ENCODE measurements at regions of chr11 and their contacts with region 1.

Region 1: DNA sequence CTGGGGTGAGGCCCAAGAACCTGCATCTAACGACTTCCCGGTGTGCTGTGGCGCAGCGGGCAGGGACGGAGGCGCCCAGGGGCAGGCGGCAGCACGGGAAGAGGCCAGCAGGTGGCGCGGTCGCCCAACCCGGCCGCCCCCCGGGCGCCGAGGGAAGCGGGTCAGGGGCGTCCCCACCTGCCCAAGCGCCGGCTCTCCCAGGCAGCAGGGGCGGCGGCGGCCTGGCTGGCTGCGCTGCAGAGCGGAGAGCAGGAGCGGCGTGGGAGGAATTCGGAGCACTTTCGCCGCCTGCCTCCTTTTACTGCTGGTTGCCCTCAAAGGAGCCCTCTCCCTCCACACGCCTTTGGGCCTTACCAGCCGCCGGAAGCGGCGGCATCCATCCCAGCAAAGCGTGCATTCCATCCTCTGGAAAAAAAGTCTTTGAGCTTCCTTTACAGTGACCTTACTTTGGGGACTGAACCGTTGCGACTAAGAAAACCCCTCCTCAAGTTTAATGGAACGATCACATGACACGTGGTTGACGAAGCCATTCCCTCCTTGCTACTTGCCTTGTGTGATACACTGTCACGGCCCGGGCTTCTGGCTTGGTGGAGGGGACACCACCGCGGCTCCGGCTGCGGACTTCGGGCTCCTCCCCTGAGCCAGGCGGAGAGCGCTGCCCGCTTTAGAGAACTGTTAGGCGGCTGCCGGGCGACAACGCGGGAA is 106.8 kb upstream of the CLMP start:
- DNase-seq: peak; percentile 73
- ATAC-seq: peak; percentile 93

Region 2: DNA sequence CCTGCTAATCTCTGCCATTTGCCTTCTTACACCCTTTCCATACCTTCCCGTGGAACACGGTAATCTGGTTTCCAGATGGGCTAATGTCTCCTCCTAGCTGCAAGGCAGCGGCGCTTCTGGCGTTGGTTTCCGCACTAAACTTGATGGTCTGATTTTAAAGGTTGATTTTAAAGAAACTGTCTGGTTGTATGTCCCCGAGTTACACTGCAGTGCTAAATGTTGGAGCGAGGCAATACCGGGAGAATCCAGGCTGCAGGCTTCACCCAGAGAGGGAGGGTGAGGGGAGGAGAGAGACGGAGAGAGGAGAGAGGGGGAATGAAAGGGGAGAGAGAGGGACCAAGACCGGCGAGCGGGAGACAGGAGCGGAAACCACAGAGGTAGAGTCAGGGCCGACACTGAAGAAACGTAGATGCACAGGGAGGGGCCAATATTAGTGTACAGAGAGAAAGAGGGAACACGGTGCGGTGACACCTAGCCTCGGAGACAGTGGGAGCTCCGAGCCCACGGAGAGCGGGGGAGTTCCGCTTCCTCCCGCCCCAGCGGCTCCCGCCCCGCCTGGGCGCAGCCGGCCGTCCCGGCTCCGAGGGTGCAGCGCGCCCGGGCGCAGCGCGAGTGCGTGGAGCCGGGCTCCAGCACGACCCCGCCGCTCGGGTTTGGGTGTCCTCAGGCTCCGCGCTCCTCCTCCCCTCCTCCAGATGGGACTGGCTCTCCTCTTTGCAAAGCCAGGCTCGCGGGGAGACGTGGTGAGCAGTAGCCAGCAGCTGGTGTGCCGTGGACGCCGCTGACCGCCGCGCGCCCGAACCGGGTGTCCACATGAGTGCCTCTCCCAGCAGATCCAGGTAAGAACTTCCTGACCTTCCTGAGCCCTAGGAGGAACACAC is 56.4 kb after region 1 on chr11:
- intact Hi-C with region 1: loop called (anchors 2 kb)
- DNase-seq: peak; percentile 52
- ATAC-seq: peak; percentile 76

Region 3: GRCh38 chr11:123407130-123407995 is 105.5 kb after region 1 on chr11:
- intact Hi-C with region 1: loop called (anchors 5 kb)
- DNase-seq: peak; percentile 41
- ATAC-seq: peak; percentile 64

Region 4: DNA sequence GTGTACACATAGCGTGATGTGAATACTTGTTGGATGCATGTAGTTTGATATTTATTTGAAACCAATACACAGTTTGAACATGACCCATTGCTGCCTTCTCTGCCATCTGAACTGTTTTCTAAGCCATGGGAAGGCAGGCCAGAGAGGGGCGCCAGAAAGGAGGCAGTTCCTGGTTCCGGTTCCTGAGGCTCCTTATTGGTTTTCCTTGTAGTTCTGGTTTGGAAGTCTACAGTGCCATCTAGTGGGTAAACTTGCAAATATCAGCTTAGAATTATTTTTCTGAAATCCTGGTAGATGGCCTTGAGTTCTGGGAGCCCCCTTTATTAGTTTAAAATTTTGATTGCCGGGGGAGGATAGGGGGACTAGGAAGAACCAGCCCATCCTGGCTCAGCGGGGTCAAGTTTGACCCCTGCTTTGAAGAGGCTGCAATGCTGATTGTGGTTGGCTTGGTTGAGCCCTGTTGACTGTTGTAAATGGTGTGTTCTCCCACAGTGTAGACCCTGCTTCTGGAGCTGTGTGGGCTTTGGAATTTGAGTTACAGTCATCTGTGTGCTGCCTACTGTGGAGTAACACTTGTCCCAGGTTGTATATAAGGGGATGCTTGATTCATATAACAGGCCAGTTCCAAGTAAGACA is 176.6 kb after region 1 on chr11:
- intact Hi-C with region 1: loop called (anchors 2 kb)
- DNase-seq: peak; percentile 58
- ATAC-seq: peak; percentile 74